ENCODE measurements at regions of chr15 and their contacts with region 1.

Region 1: DNA sequence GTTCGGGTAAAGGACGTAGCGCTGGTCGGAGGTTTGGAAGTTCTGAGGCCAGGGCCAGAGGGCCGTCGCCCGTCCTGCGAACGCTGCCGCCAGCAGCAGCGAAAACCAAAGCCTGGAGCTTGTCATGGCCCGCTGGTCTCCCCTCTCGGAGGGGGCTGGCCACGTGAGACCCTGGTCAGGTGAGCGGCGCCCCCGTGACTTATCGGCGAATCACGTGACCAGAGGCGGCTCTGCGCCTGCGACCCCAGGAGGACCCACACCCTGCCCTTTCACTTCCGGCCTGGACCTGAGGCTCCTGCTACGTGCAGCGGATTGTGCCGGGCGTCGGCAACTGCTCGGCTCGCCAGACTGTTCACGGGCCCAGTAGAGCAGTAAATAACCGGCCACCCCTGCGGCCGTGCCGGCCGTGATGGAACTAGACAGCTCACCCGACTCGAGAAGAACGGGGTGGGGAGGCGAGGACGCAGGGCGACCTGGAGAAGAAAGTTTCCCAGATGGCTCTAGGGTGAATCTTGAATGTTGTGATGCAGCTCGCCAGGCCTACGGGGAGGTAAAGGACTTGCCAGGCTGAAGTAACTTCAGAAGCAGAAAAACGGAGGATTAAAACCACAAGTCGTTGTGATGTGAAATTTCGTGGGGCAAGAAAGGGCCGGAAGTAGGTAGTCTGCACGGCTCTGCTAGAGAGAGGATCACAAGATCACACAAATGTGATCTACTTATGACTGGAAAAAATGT is at the start of gene HEXA:
- DNase-seq: peak; percentile 98
- ATAC-seq: peak; percentile 86
- H3K4me3 Mint-ChIP-seq: peak within 1 kb of the TSS; percentile 90
- H3K27ac Mint-ChIP-seq: peak within 1 kb of the TSS; percentile 98
- H3K4me1 Mint-ChIP-seq: peaks cover 40% of the 10 kb centered on the region
- H3K27me3 Mint-ChIP-seq: no peaks in the 10 kb centered on the region
- total RNA-seq, gene HEXA: 80.9 to 87.3 TPM

Region 2: GRCh38 chr15:72365844-72366243 is 10.2 kb before region 1 on chr15:
- CTCF ChIA-PET with region 1: interaction called, 3 read pairs
- POLR2A ChIA-PET with region 1: interaction called, 53 read pairs
- DNase-seq: peak; percentile 81
- ATAC-seq: peak; percentile 92
- H3K4me3 Mint-ChIP-seq: peak overlapping the region; percentile 0
- H3K27ac Mint-ChIP-seq: peak overlapping the region; percentile 77
- H3K4me1 Mint-ChIP-seq: peaks cover 32% of the 10 kb centered on the region
- H3K27me3 Mint-ChIP-seq: no peaks in the 10 kb centered on the region

Region 3: GRCh38 chr15:72464251-72464650 is 88.2 kb after region 1 on chr15:
- CTCF ChIA-PET with region 1: interaction called, 3 read pairs
- POLR2A ChIA-PET with region 1: interaction called, 10 read pairs
- DNase-seq: no peak
- ATAC-seq: no peak
- H3K4me3 Mint-ChIP-seq: no peak overlapping the region
- H3K27ac Mint-ChIP-seq: no peak overlapping the region
- H3K4me1 Mint-ChIP-seq: peaks cover 18% of the 10 kb centered on the region
- H3K27me3 Mint-ChIP-seq: no peaks in the 10 kb centered on the region

Region 4: DNA sequence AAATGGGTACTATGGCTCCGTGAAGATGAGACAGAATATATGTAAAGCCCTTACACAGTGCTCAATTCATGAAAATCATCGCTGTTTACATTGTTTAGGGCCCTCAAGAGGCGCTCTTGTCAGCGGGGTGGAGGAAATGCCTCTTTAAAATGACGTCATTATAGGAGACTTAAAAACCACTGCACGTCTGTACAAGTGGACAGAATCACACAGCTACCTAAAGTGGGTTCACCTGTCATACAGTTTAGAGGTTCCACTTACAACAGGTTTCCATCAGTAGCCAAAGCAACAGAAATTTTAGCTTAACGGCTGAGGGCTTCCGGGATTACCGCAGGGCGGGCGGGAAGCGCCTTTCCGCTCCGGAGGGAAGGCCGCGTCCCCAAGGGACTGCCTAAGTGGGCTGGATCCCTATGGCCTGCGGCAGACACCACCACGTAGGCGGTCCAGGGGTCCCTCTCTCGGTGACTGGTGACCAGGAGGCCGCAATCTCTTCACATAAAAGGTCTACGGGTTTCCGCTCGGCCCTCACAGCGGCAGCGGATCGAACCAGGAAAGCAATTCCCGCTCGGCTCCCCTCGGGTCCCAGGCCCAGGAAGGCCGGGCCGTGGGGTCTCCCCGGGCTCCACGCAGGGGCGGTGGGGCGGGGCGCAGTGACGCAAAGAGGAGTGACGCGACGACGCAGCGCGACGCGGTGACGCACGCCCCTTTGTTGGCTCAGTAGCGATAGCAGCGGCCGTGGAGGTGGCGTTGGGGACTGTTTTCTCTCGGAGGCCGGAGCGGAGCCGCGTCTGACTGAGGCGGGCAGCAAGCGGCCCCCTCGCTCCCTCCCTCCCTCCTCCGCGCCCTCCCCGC is 97.8 kb after region 1 on chr15 and contains the start of gene ARIH1:
- CTCF ChIA-PET with region 1: interaction called, 5 read pairs
- POLR2A ChIA-PET with region 1: interaction called, 37 read pairs
- DNase-seq: peak; percentile 96
- ATAC-seq: peak; percentile 79
- H3K4me3 Mint-ChIP-seq: peak within 1 kb of the TSS; percentile 94
- H3K27ac Mint-ChIP-seq: peak within 1 kb of the TSS; percentile 98
- H3K4me1 Mint-ChIP-seq: peaks cover 34% of the 10 kb centered on the region
- H3K27me3 Mint-ChIP-seq: no peaks in the 10 kb centered on the region
- total RNA-seq, gene ARIH1: 110 to 119 TPM

Measured in activated CD8-positive, alpha-beta T cell treated with anti-CD3 and anti-CD28 coated beads, Interleukin-2, amount 10 ng/mL, durations not matched to agents 7 days and 5 days (primary cell).